ENCODE measurements at regions of chr17 and their contacts with region 1.

Region 1: DNA sequence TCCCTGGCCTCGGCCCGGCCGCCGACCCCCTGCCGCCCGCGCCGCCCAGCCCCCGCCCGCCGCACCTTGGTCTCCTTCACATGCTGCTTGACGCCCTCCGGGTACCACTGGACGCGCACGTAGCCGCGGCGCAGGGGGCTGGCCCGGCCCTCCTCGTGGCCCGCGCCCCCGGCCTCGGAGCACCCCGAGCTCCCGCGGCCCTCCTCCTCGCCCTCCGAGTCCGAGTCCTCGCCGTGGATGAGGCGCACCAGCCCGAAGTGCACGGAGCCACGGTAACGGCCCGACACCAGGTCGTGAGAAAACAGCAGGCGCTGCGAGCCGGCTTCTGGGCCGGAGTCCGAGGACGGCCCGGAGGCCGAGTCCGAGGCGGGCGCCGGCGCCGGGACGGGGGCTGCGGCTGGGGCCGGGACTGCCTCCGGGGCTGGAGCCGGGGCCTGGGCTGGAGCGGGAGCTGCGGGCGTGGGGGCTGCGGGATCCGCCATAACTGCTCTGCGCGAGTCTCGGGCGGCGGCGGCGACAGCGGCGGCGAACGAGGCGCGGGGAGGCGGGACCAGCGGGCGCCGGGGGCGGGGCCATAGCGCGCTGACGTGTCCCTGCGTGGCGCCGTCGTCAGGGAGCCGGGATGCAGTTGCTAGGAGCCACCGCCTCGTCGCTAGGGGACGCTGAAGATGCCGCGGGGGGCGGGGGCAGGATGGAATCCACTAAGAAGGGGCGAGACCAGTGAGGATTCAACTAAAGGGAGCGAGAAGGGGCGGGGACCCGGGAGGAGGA is at the start of gene UBE2O:
- DNase-seq: peak; percentile 95
- ATAC-seq: peak; percentile 94
- H3K4me3 Mint-ChIP-seq: peak within 1 kb of the TSS; percentile 83
- H3K27ac Mint-ChIP-seq: peak within 1 kb of the TSS; percentile 87
- H3K4me1 Mint-ChIP-seq: peaks cover 39% of the 10 kb centered on the region
- H3K27me3 Mint-ChIP-seq: no peaks in the 10 kb centered on the region
- CTCF ChIP-seq: no peak
- total RNA-seq, gene UBE2O: 39.0 and 40.3 TPM in 2 replicates

Region 2: GRCh38 chr17:75940724-75941441 is 512.0 kb before region 1 on chr17 and contains the start of gene FBF1:
- CTCF ChIA-PET with region 1: no interaction called
- POLR2A ChIA-PET with region 1: no interaction called
- intact Hi-C with region 1: loop called (anchors 2 kb)
- DNase-seq: peak; percentile 83
- ATAC-seq: peak; percentile 100
- H3K4me3 Mint-ChIP-seq: peak within 1 kb of the TSS; percentile 86
- H3K27ac Mint-ChIP-seq: peak within 1 kb of the TSS; percentile 61
- H3K4me1 Mint-ChIP-seq: peaks cover 13% of the 10 kb centered on the region
- H3K27me3 Mint-ChIP-seq: no peaks in the 10 kb centered on the region
- CTCF ChIP-seq: no peak
- total RNA-seq, gene FBF1: 13.2 and 15.1 TPM in 2 replicates

Region 3: DNA sequence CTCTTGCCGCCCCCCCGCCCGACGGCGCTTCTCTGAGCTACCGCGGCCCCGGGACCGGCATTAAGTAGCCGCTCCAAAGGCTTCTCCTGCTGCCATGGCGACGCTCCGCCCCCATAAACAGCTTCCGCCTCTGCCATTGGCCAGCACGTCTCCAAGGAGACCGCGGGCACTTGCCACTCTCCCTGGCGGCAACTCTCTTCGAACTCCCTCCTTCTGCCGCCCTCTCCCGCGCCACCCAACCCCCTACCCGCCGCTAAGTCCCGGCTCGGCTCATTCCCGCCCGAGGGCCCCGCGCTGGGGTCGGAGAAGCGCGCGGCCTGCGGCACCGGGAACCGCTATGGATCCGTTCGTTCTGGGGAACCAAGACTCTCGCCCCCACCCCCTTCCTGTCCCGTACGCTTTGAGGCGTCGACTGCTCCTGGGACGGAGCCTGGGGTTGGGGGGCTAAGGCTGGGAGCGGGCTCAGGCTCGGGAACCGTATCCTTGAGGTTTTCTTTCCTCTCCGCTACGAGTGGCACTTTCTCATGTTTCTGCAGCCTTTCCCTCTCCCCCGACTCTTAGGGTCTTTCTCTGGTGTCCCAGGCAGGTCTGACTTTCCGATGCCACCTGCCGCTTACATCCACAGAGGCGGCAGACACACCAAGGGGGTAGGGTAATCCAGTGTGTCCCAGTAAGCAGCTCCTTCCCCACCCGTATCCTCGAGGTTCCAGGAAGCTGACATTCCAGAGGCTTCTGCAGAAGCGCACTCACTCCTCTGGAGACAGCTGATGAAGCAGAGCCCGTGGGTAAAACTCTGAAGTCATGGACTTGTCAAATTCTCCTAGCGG is 311.4 kb before region 1 on chr17 and contains the start of gene FOXJ1:
- CTCF ChIA-PET with region 1: no interaction called
- POLR2A ChIA-PET with region 1: no interaction called
- intact Hi-C with region 1: loop called (anchors 1 kb)
- DNase-seq: peak; percentile 91
- ATAC-seq: peak; percentile 75
- H3K4me3 Mint-ChIP-seq: peak within 1 kb of the TSS; percentile 80
- H3K27ac Mint-ChIP-seq: peak within 1 kb of the TSS; percentile 61
- H3K4me1 Mint-ChIP-seq: peaks cover 60% of the 10 kb centered on the region
- H3K27me3 Mint-ChIP-seq: peaks cover 10% of the 10 kb centered on the region
- CTCF ChIP-seq: no peak
- total RNA-seq, gene FOXJ1: 0.39 and 0.44 TPM in 2 replicates

Region 4: GRCh38 chr17:76337413-76337777 is 115.5 kb before region 1 on chr17:
- CTCF ChIA-PET with region 1: no interaction called
- POLR2A ChIA-PET with region 1: no interaction called
- intact Hi-C with region 1: no loop called
- DNase-seq: no peak
- ATAC-seq: no peak
- H3K4me3 Mint-ChIP-seq: no peak overlapping the region
- H3K27ac Mint-ChIP-seq: no peak overlapping the region
- H3K4me1 Mint-ChIP-seq: no peaks in the 10 kb centered on the region
- H3K27me3 Mint-ChIP-seq: no peaks in the 10 kb centered on the region
- CTCF ChIP-seq: no peak

Region 5: GRCh38 chr17:76427501-76428231 is 25.2 kb before region 1 on chr17:
- CTCF ChIA-PET with region 1: interaction called, 9 read pairs
- POLR2A ChIA-PET with region 1: interaction called, 14 read pairs
- intact Hi-C with region 1: loop called (anchors 1 kb)
- DNase-seq: no peak
- ATAC-seq: peak; percentile 86
- H3K4me3 Mint-ChIP-seq: peak overlapping the region; percentile 32
- H3K27ac Mint-ChIP-seq: peak overlapping the region; percentile 77
- H3K4me1 Mint-ChIP-seq: peaks cover 80% of the 10 kb centered on the region
- H3K27me3 Mint-ChIP-seq: no peaks in the 10 kb centered on the region
- CTCF ChIP-seq: no peak

Region 6: DNA sequence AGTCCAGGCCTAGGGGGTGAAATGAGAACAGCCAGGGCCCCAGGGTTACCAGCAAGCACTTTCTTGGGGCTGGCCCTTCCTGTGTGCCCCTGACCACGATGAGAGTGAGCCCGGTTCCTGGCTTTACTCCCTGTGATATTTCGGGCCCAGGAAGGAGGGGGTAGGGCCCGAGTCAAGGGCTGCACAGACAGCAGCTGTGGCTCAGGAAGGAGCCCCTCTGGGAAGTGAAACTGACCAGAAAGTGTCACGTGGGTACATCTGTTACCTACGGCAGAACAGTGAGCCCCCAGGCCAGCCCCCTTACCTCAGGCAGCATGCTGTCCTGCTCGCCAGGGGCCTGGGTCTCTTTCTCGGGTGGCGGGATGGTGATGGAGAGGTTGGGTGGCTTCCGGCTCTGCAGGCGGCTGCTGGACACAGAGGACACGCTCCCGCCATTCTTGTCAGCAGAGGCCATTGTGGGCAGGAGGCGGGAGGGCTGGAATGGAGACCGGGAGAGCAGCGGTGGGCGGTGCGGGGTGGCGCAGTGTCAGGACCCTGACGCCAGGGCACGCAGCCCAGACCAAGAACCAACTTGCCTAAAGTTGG is 28.3 kb after region 1 on chr17:
- CTCF ChIA-PET with region 1: no interaction called
- POLR2A ChIA-PET with region 1: interaction called, 7 read pairs
- intact Hi-C with region 1: loop called (anchors 1 kb)
- DNase-seq: peak; percentile 61
- ATAC-seq: peak; percentile 64
- H3K4me3 Mint-ChIP-seq: peak overlapping the region; percentile 81
- H3K27ac Mint-ChIP-seq: peak overlapping the region; percentile 92
- H3K4me1 Mint-ChIP-seq: peaks cover 79% of the 10 kb centered on the region
- H3K27me3 Mint-ChIP-seq: no peaks in the 10 kb centered on the region
- CTCF ChIP-seq: no peak

Region 7: GRCh38 chr17:76501018-76501826 is 48.4 kb after region 1 on chr17 and contains the start of gene RHBDF2:
- CTCF ChIA-PET with region 1: interaction called, 16 read pairs
- POLR2A ChIA-PET with region 1: interaction called, 11 read pairs
- intact Hi-C with region 1: loop called (anchors 1 kb)
- DNase-seq: peak; percentile 100
- ATAC-seq: peak; percentile 87
- H3K4me3 Mint-ChIP-seq: peak within 1 kb of the TSS; percentile 99
- H3K27ac Mint-ChIP-seq: peak within 1 kb of the TSS; percentile 95
- H3K4me1 Mint-ChIP-seq: peaks cover 64% of the 10 kb centered on the region
- H3K27me3 Mint-ChIP-seq: no peaks in the 10 kb centered on the region
- CTCF ChIP-seq: no peak
- total RNA-seq, gene RHBDF2: 150 and 189 TPM in 2 replicates

Region 8: GRCh38 chr17:76843703-76844484 is 391.0 kb after region 1 on chr17:
- CTCF ChIA-PET with region 1: no interaction called
- POLR2A ChIA-PET with region 1: no interaction called
- intact Hi-C with region 1: no loop called
- DNase-seq: no peak
- ATAC-seq: no peak
- H3K4me3 Mint-ChIP-seq: no peak overlapping the region
- H3K27ac Mint-ChIP-seq: no peak overlapping the region
- H3K4me1 Mint-ChIP-seq: peaks cover 23% of the 10 kb centered on the region
- H3K27me3 Mint-ChIP-seq: peaks cover 43% of the 10 kb centered on the region
- CTCF ChIP-seq: no peak

Measured in activated B cell treated with CpG ODN at 0.5 μM for 24 hours (primary cell).